AG04449 (cell line): ENCODE measurements at regions of chr14 and their contacts with region 1.

Region 1: GRCh38 chr14:54440873-54441868 is at the start of gene CNIH1:
- DNase-seq: no peak
- H3K4me3 ChIP-seq: peak within 1 kb of the TSS; percentile 80
- CTCF ChIP-seq: peak; percentile 89

Region 2: DNA sequence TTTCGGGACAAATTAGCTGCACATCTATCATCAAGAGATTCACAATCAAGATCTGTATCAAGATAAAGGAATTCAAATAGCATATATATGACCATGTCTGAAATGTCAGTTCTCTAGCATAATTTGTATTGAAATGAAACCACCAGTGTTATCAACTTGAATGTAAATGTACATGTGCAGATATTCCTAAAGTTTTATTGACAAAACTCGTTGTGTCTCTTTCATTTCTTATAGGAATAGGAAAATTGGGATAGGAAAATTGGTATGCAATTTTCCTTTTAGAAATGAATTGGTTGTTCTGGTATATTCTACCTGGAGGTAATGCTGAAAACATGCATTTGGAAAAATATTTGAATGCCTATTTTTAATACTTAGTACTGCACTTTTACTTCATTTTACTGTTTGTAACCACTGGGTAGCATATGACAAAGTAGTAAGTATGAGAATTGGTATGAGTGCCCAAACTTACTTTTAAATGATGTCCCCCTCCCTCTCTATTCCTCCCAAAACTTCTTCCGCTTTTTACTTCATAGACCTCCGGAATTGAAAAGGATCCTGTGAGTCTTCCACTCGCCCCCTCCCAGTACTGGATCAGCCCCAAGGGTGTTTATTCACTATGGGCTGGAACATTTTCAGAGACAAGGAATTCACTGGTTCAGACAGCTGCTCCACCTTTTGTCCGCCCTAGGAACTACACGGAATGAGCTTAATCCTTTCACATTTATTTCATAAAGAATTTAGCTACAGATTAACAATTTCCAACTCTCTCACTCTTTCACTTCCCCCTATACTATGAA is 21.0 kb before region 1 on chr14:
- CTCF ChIA-PET with region 1: interaction called, 12 read pairs
- POLR2A ChIA-PET with region 1: no interaction called
- DNase-seq: no peak
- H3K4me3 ChIP-seq: no peak overlapping the region
- CTCF ChIP-seq: peak; percentile 67

Region 3: GRCh38 chr14:54427871-54428270 is 13.3 kb before region 1 on chr14:
- CTCF ChIA-PET with region 1: interaction called, 12 read pairs
- POLR2A ChIA-PET with region 1: no interaction called
- DNase-seq: no peak
- H3K4me3 ChIP-seq: no peak overlapping the region
- CTCF ChIP-seq: no peak

Region 4: GRCh38 chr14:54465654-54466053 is 24.5 kb after region 1 on chr14:
- CTCF ChIA-PET with region 1: interaction called, 10 read pairs
- POLR2A ChIA-PET with region 1: no interaction called
- DNase-seq: no peak
- H3K4me3 ChIP-seq: no peak overlapping the region
- CTCF ChIP-seq: no peak